ENCODE measurements at regions of chr6 and their contacts with region 1.

Region 1: GRCh38 chr6:55445648-55446204 is 118.5 kb downstream of the GFRAL start:
- DNase-seq: no peak
- H3K4me3 ChIP-seq: no peak overlapping the region
- CTCF ChIP-seq: no peak
- POLR2A ChIP-seq: no peak

Region 2: DNA sequence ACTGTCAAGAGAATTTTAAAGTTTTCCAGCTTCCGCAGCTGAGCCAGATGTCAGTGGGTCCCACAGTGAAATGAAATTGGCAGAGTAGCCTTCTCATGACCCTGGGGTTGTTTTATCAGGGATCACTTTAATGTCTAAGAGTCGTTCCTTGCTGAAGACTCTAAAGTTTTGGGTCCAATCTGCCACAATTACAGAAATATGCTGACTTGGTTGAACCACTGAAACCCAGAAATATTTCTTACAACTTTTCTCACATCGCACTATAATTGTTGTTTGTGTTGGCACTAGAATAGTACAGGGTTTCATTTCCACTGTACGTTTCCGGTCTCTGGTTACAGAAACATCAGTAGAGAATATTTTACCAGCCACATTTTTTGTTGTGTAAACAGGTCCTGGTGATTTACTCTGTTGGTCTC is 24.2 kb after region 1 on chr6:
- intact Hi-C with region 1: no loop called
- DNase-seq: no peak
- H3K4me3 ChIP-seq: no peak overlapping the region
- CTCF ChIP-seq: no peak
- POLR2A ChIP-seq: no peak

Region 3: DNA sequence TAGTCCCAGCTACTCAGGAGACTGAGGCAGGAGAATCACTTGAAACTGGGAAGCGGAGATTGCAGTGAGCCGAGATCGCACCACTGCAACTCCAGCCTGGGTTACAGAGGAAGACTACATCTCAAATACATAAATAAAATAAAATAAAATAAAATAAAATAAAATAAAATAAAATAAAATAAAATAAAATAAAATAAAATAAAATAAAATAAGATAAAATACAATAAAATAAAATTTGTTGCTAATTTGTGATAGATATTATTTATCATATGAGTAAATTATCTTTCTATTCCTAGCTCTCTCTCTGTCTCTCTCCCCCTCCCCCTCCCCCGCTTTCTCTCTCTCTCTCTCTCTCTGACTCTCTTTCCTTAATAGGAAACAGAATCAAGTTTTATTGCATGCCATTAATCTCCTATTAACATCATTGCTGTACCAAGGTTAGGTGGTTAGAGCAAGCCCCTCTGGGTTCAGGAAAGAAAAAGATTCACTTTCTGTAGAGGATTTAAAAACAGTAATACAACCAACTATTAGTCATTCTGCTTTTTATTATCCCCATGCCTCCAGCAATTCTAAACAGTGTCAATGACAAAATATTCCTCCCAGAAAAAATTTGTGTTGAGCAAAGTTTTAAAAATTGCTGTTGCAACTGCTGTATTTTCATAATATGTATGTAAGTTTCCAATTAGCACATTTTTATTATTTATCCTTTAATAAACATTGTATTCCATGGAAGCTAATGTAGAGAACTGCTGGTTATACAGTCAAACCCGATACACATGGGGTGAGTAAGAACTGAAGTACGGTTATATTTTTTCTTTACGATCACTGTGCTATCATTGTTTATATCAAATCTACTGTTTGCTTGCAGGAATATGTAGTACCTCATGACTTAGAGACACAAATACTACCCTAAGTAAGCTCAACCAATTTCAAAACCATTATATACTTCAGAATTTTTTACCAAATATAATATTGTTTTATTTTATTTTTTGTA is 407.6 kb after region 1 on chr6:
- intact Hi-C with region 1: no loop called
- DNase-seq: no peak
- H3K4me3 ChIP-seq: no peak overlapping the region
- CTCF ChIP-seq: no peak
- POLR2A ChIP-seq: no peak

Region 4: DNA sequence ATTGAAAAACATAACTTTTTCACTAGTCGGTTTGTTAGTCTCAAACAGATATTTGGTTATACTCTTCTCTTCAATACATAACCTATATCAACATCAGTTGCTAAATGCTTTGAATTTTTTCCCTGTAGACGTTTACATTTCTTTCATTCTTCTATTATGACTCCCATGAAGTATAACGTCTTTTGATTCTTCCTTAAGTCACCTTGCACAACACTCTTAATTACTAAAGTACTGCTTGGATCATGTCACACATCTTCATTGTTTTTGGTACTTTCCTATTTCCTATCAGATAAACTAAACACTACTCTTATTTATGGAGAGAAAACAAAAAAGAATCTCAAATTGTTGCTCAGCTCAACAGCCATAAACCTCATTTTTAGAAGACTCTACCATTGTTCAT is 452.6 kb after region 1 on chr6:
- intact Hi-C with region 1: loop called (anchors 10 kb)
- DNase-seq: no peak
- H3K4me3 ChIP-seq: no peak overlapping the region
- CTCF ChIP-seq: no peak
- POLR2A ChIP-seq: no peak

Measured in lower leg skin (tissue), 4 donors.